Heart right ventricle (tissue), 16 donors: ENCODE measurements at regions of chr12 and their contacts with region 1.

Region 1: GRCh38 chr12:79698957-79699356 is 8.2 kb upstream of the PAWR start:
- DNase-seq: no peak
- ATAC-seq: no peak
- H3K4me3 ChIP-seq: no peak overlapping the region
- H3K27ac ChIP-seq: no peak overlapping the region
- H3K4me1 ChIP-seq: no peaks in the 10 kb centered on the region
- H3K27me3 ChIP-seq: no peaks in the 10 kb centered on the region
- CTCF ChIP-seq: no peak

Region 2: DNA sequence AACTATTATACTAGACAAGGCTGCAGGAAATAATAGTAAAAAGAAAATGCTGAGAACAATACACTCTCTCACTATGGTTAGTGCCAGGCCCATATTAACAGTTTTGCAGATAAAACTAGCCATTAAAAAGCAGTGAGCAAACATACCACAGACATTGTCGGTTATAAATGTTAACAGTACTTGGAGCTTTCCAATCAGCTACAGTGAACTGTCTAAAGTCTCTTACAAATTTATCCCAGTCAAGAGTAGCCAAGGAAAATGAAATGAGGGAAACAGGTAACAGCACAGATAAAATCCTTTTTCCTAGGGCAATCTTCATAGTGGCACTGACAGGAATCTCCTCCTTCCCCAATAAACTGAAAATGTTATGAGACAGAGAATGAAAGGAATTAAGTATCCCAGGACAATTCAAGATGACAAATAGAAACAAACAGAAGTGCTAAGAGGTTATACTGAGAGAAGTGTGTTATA is 39.0 kb before region 1 on chr12:
- intact Hi-C with region 1: no loop called
- DNase-seq: no peak
- ATAC-seq: no peak
- H3K4me3 ChIP-seq: no peak overlapping the region
- H3K27ac ChIP-seq: no peak overlapping the region
- H3K4me1 ChIP-seq: peaks cover 0 to 11% (median 0%) of the 10 kb centered on the region in 9 donors
- H3K27me3 ChIP-seq: no peaks in the 10 kb centered on the region
- CTCF ChIP-seq: no peak

Region 3: GRCh38 chr12:79717006-79717405 is 18.0 kb after region 1 on chr12:
- intact Hi-C with region 1: loop called in 1 of 10 experiments (anchors 1 kb)
- DNase-seq: no peak
- ATAC-seq: no peak
- H3K4me3 ChIP-seq: no peak overlapping the region
- H3K27ac ChIP-seq: no peak overlapping the region
- H3K4me1 ChIP-seq: no peaks in the 10 kb centered on the region
- H3K27me3 ChIP-seq: peaks cover 0 to 9% (median 0%) of the 10 kb centered on the region in 7 donors
- CTCF ChIP-seq: no peak